Tibial artery (tissue), 4 donors: ENCODE measurements at regions of chr2 and their contacts with region 1.

Region 1: GRCh38 chr2:231604685-231605606 is 12.3 kb downstream of the TEX44 start:
- DNase-seq: peak; percentile 99
- H3K4me3 ChIP-seq: peak overlapping the region; percentile 57 to 69
- H3K27ac ChIP-seq: peak overlapping the region; percentile 99
- H3K4me1 ChIP-seq: peaks cover 0 to 52% (median 39%) of the 10 kb centered on the region in 4 donors
- H3K27me3 ChIP-seq: no peaks in the 10 kb centered on the region
- CTCF ChIP-seq: no peak

Region 2: DNA sequence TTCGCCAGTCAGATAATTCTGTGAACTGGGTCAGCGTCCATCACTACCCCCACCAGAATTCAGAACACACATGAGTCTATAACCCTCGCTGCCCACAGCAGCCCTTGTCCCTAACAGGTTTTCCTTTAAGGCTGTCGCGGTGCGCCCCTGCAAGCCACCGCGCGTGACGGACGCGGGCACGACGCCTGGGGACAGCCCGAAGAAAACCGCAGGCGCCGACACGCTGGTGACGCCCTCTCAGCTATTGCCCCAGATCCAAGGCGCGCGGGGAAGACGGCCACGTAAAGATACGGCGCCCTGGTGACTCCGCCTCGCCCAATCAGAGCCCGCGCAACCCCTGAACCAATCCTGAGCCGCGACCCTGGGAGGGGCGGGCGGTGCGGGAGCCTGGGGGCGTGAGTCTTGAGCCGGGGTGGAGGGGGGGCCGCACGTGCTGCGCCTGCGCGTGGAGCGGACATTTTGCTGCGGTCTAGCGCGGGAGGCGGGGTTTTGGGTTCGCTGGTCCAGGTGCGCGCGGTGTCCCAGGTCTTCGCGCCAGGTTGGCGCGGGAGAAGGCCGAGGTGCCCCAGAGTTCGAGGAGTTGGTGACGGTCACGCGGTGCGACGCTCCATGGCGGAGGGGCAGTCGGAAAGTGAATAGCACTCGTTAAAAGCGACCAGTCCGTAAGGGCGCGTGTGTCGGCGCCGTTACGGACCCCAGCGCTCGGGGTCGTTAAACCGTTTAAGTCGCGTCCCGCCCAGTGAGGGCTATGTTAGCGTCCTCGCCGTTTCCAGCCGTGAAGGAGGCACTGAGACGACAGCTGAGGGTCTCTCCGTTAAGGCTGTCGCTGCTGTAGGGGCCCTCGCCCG is 90.6 kb before region 1 on chr2:
- intact Hi-C with region 1: loop called (anchors 5 kb)
- DNase-seq: peak; percentile 99
- H3K4me3 ChIP-seq: peak overlapping the region; percentile 62 to 68
- H3K27ac ChIP-seq: peak overlapping the region; percentile 85 to 88
- H3K4me1 ChIP-seq: peaks cover 0 to 10% (median 2%) of the 10 kb centered on the region in 4 donors
- H3K27me3 ChIP-seq: no peaks in the 10 kb centered on the region
- CTCF ChIP-seq: no peak

Region 3: GRCh38 chr2:231563378-231563961 is 41.5 kb before region 1 on chr2:
- intact Hi-C with region 1: loop called (anchors 5 kb)
- DNase-seq: no peak
- H3K4me3 ChIP-seq: no peak overlapping the region
- H3K27ac ChIP-seq: no peak overlapping the region
- H3K4me1 ChIP-seq: no peaks in the 10 kb centered on the region
- H3K27me3 ChIP-seq: no peaks in the 10 kb centered on the region
- CTCF ChIP-seq: peak; percentile 28 to 63

Region 4: GRCh38 chr2:231666171-231667095 is 61.5 kb after region 1 on chr2:
- intact Hi-C with region 1: loop called (anchors 2 kb)
- DNase-seq: peak; percentile 98 to 99
- H3K4me3 ChIP-seq: peak overlapping the region; percentile 52 to 55
- H3K27ac ChIP-seq: peak overlapping the region; percentile 97 to 98
- H3K4me1 ChIP-seq: peaks cover 6 to 49% (median 24%) of the 10 kb centered on the region in 4 donors
- H3K27me3 ChIP-seq: no peaks in the 10 kb centered on the region
- CTCF ChIP-seq: peak; percentile 7 to 45